Panc1 (cell line): ENCODE measurements at regions of chr19 and their contacts with region 1.

Region 1: DNA sequence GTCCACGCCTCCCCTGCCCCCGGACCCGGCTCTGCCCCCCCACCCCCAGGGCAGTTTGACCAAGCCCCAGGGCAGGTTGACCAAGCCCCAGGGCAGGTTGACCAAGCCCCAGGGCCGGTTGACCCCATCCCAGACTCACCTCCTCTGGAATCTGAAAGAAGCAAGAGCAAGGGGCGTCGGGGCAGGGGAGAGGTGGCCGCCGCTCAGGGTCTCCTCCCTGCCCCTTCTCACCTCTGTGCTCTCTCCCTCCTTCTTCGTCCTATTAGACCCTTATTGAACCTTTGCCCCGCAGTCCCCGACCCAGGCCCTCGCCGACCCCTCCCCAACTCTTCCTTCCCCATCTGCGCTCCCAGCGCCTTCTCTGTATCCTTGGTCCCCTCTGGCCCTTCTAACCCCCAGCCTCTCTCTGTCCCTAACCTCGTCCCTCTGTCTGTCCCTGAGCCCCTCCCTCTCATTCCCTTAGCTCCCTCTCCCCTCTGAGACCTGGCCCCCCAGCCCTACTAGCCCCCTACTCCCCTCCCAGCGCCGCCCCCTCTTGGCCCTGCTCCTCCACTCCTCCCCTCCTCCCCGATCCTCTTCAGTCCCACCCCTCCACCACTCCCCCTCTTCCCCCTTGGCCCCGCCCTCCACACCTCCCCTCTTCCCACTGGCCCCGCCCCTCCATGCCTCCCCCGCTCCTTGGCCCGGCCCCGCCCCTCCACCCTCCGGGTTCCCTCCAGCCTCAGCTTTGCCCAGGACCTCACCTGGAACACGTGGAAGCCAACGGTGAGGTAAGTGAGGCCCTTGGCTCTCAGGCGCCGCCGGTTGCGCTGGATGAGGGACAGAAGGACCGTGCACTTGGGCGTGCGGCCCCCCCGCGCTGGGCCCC is 7.6 kb downstream of the CAPN12 start:
- DNase-seq: no peak
- ATAC-seq: no peak; the same call in 1 of the 2 replicates
- H3K4me3 ChIP-seq: peak overlapping the region; percentile 34 to 44
- H3K27ac ChIP-seq: peak overlapping the region; percentile 32
- H3K4me1 ChIP-seq: peaks cover 37% of the 10 kb centered on the region
- H3K27me3 ChIP-seq: no peaks in the 10 kb centered on the region
- CTCF ChIP-seq: no peak

Region 2: DNA sequence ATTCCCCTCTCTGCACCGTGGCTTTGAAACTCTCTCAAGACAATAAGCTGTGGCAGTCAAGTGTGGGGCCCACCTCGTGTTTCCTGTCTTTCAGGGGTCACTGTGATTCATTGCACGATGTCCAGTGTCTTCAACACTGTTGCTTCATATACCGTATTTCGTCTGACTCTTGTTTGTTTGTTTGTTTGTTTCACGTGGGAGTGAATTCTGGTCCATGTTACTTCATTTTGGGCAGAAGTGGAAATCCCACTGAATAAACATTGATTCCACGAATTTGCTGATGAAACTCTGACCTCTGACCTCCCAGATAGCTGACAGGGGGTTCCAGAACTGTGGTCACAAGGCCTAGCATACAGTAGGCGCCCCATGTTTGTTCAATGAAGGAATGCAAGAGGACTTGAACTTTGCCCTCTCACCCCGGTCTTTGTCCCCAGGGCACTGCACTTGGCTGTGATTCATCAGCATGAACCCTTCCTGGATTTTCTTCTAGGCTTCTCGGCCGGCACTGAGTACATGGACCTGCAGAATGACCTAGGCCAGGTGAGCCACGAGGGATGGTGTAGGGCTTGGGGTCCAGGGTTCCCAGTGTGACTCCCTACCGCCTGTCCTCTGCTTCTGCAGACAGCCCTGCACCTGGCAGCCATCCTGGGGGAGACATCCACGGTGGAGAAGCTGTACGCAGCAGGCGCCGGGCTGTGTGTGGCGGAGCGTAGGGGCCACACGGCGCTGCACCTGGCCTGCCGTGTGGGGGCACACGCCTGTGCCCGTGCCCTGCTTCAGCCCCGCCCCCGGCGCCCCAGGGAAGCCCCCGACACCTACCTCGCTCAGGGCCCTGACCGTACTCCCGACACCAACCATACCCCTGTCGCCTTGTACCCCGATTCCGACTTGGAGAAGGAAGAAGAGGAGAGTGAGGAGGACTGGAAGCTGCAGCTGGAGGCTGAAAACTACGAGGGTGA is 168.2 kb after region 1 on chr19:
- CTCF ChIA-PET with region 1: no interaction called
- POLR2A ChIA-PET with region 1: interaction called, 17 read pairs
- in situ Hi-C with region 1: no loop called
- intact Hi-C with region 1: no loop called
- DNase-seq: no peak
- ATAC-seq: no peak
- H3K4me3 ChIP-seq: no peak overlapping the region
- H3K27ac ChIP-seq: no peak overlapping the region
- H3K4me1 ChIP-seq: peaks cover 14% of the 10 kb centered on the region
- H3K27me3 ChIP-seq: no peaks in the 10 kb centered on the region
- CTCF ChIP-seq: no peak

Region 3: DNA sequence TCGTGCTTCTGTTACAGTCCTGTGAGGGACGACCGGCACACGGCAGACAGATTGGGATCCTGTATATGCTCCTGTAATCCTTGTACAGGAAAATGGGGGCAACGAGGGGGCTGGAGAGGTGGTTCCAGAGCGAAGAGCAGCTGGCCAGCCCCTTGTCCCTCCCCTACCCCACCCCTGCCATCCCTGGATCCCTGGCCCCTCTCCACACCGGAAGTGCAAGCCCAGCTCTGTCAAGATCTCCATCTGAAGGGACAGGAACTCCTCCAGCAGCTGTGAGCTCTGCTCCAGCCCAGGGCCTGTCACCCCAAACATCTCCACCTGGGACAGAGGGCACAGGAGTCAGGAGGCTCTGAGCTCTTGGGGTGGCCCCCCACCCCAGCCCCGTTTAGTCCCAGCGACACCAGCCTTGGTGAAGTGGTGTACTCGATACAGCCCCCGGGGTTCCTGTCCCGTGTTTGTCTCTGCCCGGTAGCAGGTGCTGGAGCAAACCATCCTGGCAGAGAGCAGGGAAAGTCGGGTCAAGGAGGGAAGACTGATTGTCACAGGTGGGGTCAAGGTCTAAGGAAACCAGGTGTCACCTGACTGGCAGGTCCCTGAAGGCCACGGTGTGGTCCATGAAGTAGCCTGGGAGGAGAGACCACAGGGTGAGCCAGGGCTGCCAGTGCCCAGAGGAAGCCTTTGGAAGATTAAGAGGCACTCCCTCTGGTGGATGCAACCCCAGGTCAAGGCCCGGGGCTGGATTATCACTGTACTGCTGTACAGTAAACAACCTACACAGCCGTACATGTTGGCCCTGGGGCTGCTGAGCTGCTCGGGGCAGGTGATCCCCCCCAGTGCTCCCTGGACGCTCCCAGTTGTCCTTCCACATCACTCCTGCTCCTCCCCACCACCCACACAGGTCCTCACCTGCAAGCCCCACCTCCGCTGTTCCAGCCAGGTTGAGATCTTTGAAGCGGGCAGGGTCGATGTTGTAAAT is 181.2 kb after region 1 on chr19:
- CTCF ChIA-PET with region 1: interaction called, 10 read pairs
- POLR2A ChIA-PET with region 1: no interaction called
- in situ Hi-C with region 1: no loop called
- intact Hi-C with region 1: no loop called
- DNase-seq: no peak
- ATAC-seq: peak; percentile 78
- H3K4me3 ChIP-seq: no peak overlapping the region
- H3K27ac ChIP-seq: peak overlapping the region; percentile 0; the same call in 1 of the 2 replicates
- H3K4me1 ChIP-seq: peaks cover 11% of the 10 kb centered on the region
- H3K27me3 ChIP-seq: no peaks in the 10 kb centered on the region
- CTCF ChIP-seq: no peak